Activated T-helper 2 cell treated with anti-CD3 and anti-CD28 coated beads, Interferon-gamma antibody, Interleukin-2, Interleukin-4, amounts not matched to agents 10 μg/mL and 5 μg/mL and 100 μg/mL, durations not matched to agents 14 hours and 24 hours and 36 hours (primary cell): ENCODE measurements at regions of chr1 and their contacts with region 1.

Region 1: DNA sequence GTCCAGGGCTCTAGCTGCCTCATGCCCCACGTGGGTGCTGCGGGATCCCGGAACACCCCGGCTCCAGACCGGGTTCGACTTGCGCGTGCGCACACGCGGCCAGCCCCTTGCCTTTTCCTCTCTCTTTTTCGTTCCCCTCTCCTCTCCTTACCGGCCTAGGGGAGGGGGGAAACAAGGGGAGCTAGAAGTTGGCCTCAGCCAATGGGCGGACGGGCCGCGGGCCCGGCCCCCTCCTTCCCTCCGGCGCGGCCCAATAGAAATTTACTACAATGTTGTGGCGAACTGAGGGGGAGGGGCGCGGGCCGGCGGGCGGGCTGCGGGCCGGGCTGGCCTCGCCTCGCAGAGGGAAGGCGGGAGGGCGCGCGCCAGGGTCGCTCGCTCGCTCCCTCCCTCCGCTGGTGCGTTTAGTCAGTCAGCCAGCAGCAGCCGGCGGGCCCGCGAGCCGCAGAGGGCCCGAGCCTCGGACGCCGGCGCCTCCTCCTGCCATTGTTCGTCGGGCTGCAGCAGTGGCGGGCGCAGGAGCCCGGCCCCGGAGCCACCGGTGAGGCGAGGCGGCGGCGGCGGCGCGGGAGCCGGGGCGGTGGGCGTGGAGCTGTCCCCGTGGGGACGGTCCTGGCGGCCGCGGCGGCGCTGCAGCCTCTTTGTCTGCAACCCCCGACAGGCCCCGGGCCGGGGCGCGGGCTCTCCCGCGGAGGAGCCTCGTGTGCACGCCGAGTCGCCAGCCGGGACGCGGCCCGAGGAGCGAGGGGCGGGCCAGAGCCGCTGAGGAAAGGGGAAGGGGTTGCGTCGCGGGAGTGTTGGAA is at the start of gene EPB41:
- DNase-seq: peak; percentile 89
- H3K4me3 Mint-ChIP-seq: peak within 1 kb of the TSS; percentile 91
- H3K27ac Mint-ChIP-seq: peak within 1 kb of the TSS; percentile 91
- H3K4me1 Mint-ChIP-seq: peaks cover 37% of the 10 kb centered on the region
- H3K27me3 Mint-ChIP-seq: no peaks in the 10 kb centered on the region
- total RNA-seq, gene EPB41: 62.6 and 68.0 TPM in 2 replicates

Region 2: DNA sequence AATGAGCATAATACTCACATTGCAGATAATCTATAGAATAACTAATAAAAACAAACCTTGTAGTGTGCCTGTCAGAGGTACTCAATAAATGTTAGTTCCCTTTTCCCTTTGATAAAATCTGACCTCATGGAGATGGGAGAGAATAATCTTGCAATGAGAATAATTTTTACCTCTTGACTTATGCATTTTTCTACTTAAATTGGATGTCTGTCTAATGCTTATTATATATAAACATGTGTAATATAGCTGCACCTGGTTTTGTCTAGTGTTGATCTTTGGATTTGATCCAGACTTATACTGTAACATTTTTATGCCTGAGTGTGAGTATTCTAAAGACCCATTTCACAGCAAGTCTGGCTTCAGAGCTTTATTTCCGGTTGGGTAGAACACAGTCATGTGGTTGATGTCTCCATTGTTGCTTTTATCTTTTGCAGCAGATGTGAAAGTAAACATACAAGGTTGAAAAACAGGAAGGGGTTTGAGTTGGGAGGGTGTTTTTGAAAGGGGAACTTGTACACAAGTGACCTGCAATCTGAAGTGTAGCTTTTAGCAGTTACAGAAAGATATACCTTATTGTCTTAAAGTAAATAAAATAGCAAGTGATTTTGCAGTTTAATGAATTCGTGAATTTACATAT is 12.3 kb after region 1 on chr1:
- intact Hi-C with region 1: loop called (anchors 1 kb)
- DNase-seq: peak; percentile 49
- H3K4me3 Mint-ChIP-seq: peak overlapping the region; percentile 52
- H3K27ac Mint-ChIP-seq: peak overlapping the region; percentile 77
- H3K4me1 Mint-ChIP-seq: peaks cover 38% of the 10 kb centered on the region
- H3K27me3 Mint-ChIP-seq: no peaks in the 10 kb centered on the region

Region 3: DNA sequence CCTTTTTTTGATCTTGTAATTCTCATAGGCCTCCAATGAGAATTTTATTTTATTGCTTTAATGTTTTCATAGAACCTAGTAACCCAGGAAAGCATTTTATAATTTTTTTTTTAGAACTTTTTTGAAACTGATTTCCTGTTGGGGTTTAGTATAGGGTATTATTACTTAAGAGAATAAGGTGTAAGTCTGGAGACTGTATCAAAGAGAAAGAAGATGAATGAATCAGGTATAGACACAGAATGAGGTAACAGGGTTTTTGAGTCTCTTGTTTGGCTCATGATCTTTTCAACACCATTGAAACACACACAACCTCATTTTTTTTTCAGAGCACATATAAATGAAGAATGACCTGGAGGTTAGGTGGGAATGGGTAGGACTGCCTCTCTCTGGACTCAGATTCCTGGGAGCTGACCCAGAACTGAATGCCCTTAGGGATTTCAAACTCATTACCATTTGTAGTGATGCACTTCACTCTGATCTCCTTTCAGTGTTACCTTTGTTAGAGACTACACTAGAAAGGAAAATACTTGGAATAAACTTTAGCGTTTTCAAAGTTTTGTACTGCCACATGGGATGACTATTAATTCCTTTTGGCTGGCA is 50.9 kb after region 1 on chr1:
- intact Hi-C with region 1: loop called (anchors 1 kb)
- DNase-seq: no peak
- H3K4me3 Mint-ChIP-seq: no peak overlapping the region
- H3K27ac Mint-ChIP-seq: no peak overlapping the region
- H3K4me1 Mint-ChIP-seq: peaks cover 34% of the 10 kb centered on the region
- H3K27me3 Mint-ChIP-seq: no peaks in the 10 kb centered on the region

Region 4: DNA sequence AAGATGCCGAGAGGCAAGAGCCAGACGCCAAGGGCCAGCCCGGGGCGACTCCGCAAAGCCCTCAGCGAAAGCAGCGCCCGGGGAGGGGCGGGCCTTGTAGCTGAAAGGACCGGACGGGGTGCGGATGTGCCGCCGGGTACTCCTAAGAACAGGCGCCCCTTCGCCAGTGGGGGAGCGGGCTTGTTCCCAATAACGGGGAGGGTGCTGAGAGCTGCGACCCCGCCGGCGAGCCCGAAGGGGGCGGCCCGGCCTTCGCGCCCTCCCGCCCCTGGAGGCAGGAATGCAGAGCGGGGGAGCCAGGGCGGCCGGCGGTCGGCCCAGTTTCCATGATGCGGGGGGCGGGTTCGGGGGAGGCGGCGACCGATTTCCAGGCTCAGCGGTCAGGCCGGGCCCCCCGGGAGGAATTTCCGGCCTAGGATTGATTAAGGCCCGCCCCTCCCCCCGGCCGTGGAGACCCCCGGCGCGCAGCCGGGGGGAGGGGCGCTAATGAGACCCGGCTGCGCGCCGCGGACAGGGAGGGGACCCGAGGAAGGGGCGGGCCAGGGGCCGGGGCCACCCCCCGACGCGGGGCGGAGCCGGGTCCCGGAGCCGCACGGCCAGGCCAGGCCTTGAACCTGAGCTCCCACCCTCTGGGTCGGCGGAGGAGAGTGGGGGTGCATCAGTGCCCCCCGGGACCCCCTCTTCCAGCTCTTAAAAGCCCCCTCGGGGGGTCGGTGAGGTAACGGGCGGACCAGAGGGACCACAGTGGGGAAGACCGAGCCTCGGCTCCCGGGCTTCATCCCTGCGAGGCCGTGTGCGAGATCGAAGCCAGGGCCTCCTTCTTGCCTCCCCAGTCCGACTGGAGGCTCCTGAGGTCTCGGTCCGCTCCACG is 210.2 kb after region 1 on chr1:
- intact Hi-C with region 1: loop called (anchors 10 kb)
- DNase-seq: peak; percentile 41
- H3K4me3 Mint-ChIP-seq: peak overlapping the region; percentile 75
- H3K27ac Mint-ChIP-seq: no peak overlapping the region
- H3K4me1 Mint-ChIP-seq: no peaks in the 10 kb centered on the region
- H3K27me3 Mint-ChIP-seq: peaks cover 25% of the 10 kb centered on the region